Activated CD4-positive, alpha-beta T cell treated with anti-CD3 and anti-CD28 coated beads for 36 hours (primary cell): ENCODE measurements at regions of chrX and their contacts with region 1.

Region 1: GRCh38 chrX:54439967-54440871 is at the start of gene TSR2:
- DNase-seq: peak; percentile 88
- ATAC-seq: peak; percentile 96
- H3K4me3 Mint-ChIP-seq: peak within 1 kb of the TSS; percentile 88
- H3K27ac Mint-ChIP-seq: peak within 1 kb of the TSS; percentile 83
- H3K4me1 Mint-ChIP-seq: peaks cover 18% of the 10 kb centered on the region
- H3K27me3 Mint-ChIP-seq: no peaks in the 10 kb centered on the region
- total RNA-seq, gene TSR2: 31.0 to 34.1 TPM

Region 2: GRCh38 chrX:53422086-53422860 is 1017.9 kb before region 1 on chrX and contains the start of gene SMC1A:
- CTCF ChIA-PET with region 1: no interaction called
- POLR2A ChIA-PET with region 1: no interaction called
- intact Hi-C with region 1: loop called in 1 of 2 experiments (anchors 5 kb)
- DNase-seq: peak; percentile 96
- ATAC-seq: peak; percentile 91
- H3K4me3 Mint-ChIP-seq: peak within 1 kb of the TSS; percentile 94
- H3K27ac Mint-ChIP-seq: peak within 1 kb of the TSS; percentile 97
- H3K4me1 Mint-ChIP-seq: peaks cover 27% of the 10 kb centered on the region
- H3K27me3 Mint-ChIP-seq: no peaks in the 10 kb centered on the region
- total RNA-seq, gene SMC1A: 155 to 190 TPM

Region 3: DNA sequence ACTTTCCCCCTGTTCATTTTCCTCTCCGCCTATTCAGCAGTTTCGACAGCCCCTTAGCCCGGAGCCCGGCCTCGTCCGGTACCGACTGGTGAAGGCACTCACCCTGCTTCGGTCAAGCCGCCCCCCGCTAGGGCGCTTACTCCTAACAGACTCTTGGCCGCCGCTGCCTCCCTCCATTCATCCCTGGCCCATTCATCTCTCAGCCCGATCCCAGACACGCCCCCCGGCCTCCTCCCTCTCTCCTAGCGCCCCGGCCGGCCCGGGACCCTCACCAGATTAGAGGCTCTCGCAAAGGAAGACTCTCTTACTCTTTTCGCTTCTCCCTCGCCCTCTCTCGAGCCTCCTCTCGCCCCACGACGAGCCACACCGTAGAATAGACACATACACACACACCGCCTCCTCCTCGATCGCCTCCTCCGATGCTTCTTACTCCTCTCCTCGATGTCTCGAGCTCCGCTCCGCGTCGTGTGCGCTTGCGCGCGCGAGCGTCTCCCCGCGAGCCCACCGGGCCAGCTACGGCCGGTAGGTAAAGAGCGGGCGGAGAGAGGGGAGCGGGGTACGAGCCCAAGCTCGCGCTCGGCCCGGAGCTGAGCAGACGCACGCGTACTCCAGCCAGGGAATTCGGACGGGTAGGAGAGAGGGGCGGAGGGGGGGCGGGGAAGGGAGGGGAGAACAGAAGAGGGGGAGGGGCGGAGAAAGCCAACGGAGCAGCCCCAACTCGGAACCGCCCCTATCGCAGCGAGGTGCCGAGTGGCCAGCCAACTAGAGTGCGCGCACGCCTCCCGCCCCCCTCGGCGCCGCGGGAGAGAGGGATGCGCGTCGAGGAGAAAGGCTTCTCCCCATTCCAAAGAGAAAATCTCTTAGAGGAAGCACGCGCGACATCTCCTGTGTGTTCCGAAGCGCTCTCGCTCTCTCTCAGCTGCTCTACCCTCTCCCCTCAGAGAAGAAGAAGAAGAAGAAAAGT is 82.5 kb before region 1 on chrX and contains the start of gene WNK3:
- CTCF ChIA-PET with region 1: no interaction called
- POLR2A ChIA-PET with region 1: no interaction called
- intact Hi-C with region 1: loop called in 1 of 2 experiments (anchors 1 kb)
- DNase-seq: peak; percentile 72
- ATAC-seq: peak; percentile 71
- H3K4me3 Mint-ChIP-seq: peak within 1 kb of the TSS; percentile 77
- H3K27ac Mint-ChIP-seq: peak within 1 kb of the TSS; percentile 65
- H3K4me1 Mint-ChIP-seq: peaks cover 17% of the 10 kb centered on the region
- H3K27me3 Mint-ChIP-seq: peaks cover 23% of the 10 kb centered on the region
- total RNA-seq, gene WNK3: 0.74 to 1.1 TPM

Region 4: DNA sequence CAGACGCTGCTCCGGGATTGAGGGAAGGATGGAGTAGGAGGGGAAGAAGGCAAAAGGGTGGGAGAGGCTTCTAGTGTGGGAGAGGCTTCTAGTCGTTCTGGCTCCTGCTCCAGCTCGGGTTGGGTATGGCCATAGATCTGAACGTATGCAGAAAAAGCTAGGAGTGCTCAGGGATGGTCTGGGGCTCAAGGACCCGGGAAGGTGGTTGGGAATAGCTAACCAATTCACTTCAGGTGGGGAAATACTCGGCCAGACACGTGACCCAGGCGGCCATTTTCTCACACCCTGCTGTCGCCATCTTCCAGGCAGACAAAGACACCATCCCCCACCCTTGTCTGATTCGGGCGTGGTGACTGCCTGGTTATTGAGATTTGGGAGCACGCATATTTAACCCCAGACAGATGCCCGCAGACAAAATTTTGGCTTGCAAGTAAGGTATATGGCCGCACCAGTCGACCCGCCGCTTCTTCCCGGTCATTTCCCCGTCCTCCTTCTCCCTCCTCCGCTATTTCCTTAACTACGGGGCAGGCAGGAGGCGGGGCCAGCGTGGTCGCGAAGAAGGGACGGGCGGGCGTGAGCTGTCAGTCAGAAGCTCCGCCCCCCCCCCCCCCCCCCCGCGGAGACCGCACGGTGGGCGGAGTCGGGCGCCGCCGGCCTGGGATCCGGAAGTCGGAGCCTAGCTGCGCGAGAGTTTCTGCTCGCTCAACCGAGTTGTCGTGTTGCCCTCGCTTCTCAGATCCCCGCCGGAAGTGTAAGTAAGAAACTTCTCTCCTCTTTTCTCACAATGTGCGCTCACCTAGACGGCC is 89.5 kb after region 1 on chrX and contains the start of gene GNL3L:
- CTCF ChIA-PET with region 1: interaction called, 3 read pairs
- POLR2A ChIA-PET with region 1: no interaction called
- intact Hi-C with region 1: loop called in 1 of 2 experiments (anchors 1 kb)
- DNase-seq: peak; percentile 89
- ATAC-seq: peak; percentile 88
- H3K4me3 Mint-ChIP-seq: peak within 1 kb of the TSS; percentile 90
- H3K27ac Mint-ChIP-seq: peak within 1 kb of the TSS; percentile 90
- H3K4me1 Mint-ChIP-seq: peaks cover 26% of the 10 kb centered on the region
- H3K27me3 Mint-ChIP-seq: no peaks in the 10 kb centered on the region
- total RNA-seq, gene GNL3L: 62.5 to 62.8 TPM

Region 5: GRCh38 chrX:54999717-55000598 is 559.7 kb after region 1 on chrX and contains the start of gene APEX2:
- CTCF ChIA-PET with region 1: no interaction called
- POLR2A ChIA-PET with region 1: no interaction called
- intact Hi-C with region 1: loop called in 1 of 2 experiments (anchors 5 kb)
- DNase-seq: peak; percentile 92
- ATAC-seq: peak; percentile 96
- H3K4me3 Mint-ChIP-seq: peak within 1 kb of the TSS; percentile 94
- H3K27ac Mint-ChIP-seq: peak within 1 kb of the TSS; percentile 94
- H3K4me1 Mint-ChIP-seq: peaks cover 21% of the 10 kb centered on the region
- H3K27me3 Mint-ChIP-seq: no peaks in the 10 kb centered on the region
- total RNA-seq, gene APEX2: 37.7 to 41.4 TPM

Region 6: DNA sequence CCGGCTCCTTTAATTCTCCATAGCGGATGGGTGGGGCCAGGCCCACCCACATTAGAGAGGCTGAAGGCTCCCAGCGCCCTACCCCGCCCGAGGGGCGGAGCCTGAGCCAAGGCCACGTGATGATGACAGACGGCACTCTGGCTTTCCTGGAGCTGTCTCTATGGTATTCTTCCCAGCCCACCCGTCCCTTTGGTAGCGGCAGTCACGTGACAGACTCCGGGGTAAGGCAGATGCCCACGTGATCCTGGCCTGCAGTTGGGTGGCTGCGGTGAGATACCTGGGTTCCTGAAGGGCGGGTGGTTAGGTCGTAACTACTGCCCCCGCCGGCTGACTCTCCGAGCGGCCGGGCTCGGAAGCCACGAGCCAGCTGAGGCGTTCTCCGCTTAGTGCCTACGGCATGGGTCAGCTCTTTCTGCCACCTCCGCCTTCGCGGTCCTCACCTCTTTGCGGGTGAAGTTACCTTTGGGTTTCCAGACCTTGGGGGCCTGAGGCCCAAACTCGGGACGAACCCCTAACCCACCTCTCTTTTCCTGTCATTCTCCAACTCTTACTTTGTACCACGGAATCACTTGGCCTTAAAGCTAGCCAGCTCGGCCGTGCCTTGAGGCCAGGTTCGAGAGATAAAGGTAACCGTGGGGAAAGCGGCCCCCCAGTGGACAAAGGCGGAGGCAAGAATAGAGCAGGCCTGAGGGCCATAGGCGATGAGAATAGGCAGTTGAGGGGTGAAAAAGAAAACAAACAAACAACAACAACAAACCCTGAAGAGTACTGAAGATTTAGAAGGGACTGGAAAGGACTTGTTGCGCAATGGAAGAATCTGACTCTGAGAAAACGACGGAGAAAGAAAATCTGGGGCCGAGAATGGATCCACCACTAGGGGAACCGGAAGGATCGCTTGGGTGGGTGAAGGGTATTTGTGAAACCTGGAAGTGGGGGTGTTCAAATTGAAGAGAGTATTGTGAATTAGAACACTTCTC is 1277.6 kb after region 1 on chrX and contains the start of gene RRAGB:
- CTCF ChIA-PET with region 1: no interaction called
- POLR2A ChIA-PET with region 1: no interaction called
- intact Hi-C with region 1: loop called in 1 of 2 experiments (anchors 5 kb)
- DNase-seq: peak; percentile 93
- ATAC-seq: peak; percentile 99
- H3K4me3 Mint-ChIP-seq: peak within 1 kb of the TSS; percentile 87
- H3K27ac Mint-ChIP-seq: peak within 1 kb of the TSS; percentile 87
- H3K4me1 Mint-ChIP-seq: peaks cover 33% of the 10 kb centered on the region
- H3K27me3 Mint-ChIP-seq: no peaks in the 10 kb centered on the region
- total RNA-seq, gene RRAGB: 4.3 to 5.0 TPM